ENCODE measurements at regions of chr2 and their contacts with region 1.

Region 1: GRCh38 chr2:65320042-65320725 is 92.6 kb downstream of the ACTR2 start:
- DNase-seq: peak; percentile 56
- H3K4me3 Mint-ChIP-seq: no peak overlapping the region
- H3K27ac Mint-ChIP-seq: peak overlapping the region; percentile 89
- H3K4me1 Mint-ChIP-seq: peaks cover 24% of the 10 kb centered on the region
- H3K27me3 Mint-ChIP-seq: no peaks in the 10 kb centered on the region

Region 2: DNA sequence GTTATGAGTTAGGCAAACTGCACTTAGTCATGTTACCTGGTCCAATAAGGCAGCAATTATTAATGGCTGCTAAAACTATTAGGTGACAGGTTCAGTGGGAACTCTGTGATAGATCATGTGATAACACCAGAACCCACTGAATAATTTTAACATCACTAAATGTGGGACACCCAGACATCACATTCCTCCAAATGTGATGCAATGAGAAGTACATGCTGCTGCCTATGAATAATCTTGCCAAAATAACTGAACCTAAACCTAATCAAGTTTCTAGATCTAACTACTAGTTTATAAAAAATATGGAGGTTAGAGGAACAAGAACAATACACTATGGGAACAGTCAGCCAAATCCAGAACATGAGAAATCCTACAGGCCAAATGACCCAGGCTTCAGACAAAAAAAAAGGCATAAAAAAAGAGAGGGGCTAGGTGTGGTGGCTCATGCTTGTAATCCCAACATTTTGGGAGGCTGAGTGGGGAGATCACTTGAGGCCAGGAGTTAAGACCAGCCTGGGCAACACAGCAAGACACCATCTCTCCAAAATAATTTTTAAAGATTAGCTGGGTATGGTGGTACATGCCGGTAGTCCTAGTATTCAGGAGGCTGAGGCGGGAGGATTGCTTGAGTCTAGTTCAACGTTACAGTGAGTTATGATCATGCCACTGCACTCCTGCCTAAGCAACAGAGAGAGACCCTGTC is 99.6 kb before region 1 on chr2:
- CTCF ChIA-PET with region 1: no interaction called
- POLR2A ChIA-PET with region 1: no interaction called
- intact Hi-C with region 1: no loop called
- DNase-seq: no peak
- H3K4me3 Mint-ChIP-seq: no peak overlapping the region
- H3K27ac Mint-ChIP-seq: no peak overlapping the region
- H3K4me1 Mint-ChIP-seq: no peaks in the 10 kb centered on the region
- H3K27me3 Mint-ChIP-seq: no peaks in the 10 kb centered on the region

Region 3: GRCh38 chr2:65264821-65265670 is 55.1 kb before region 1 on chr2:
- CTCF ChIA-PET with region 1: interaction called, 11 read pairs
- POLR2A ChIA-PET with region 1: no interaction called
- intact Hi-C with region 1: no loop called
- DNase-seq: no peak
- H3K4me3 Mint-ChIP-seq: no peak overlapping the region
- H3K27ac Mint-ChIP-seq: no peak overlapping the region
- H3K4me1 Mint-ChIP-seq: peaks cover 12% of the 10 kb centered on the region
- H3K27me3 Mint-ChIP-seq: no peaks in the 10 kb centered on the region

Region 4: GRCh38 chr2:65300761-65301711 is 19.1 kb before region 1 on chr2:
- CTCF ChIA-PET with region 1: interaction called, 28 read pairs
- POLR2A ChIA-PET with region 1: interaction called, 28 read pairs
- intact Hi-C with region 1: loop called (anchors 1 kb)
- DNase-seq: peak; percentile 87
- H3K4me3 Mint-ChIP-seq: peak overlapping the region; percentile 50
- H3K27ac Mint-ChIP-seq: peak overlapping the region; percentile 77
- H3K4me1 Mint-ChIP-seq: peaks cover 45% of the 10 kb centered on the region
- H3K27me3 Mint-ChIP-seq: peaks cover 15% of the 10 kb centered on the region

Region 5: GRCh38 chr2:65344689-65345088 is 24.5 kb after region 1 on chr2:
- CTCF ChIA-PET with region 1: no interaction called
- POLR2A ChIA-PET with region 1: no interaction called
- intact Hi-C with region 1: no loop called
- DNase-seq: no peak
- H3K4me3 Mint-ChIP-seq: no peak overlapping the region
- H3K27ac Mint-ChIP-seq: no peak overlapping the region
- H3K4me1 Mint-ChIP-seq: no peaks in the 10 kb centered on the region
- H3K27me3 Mint-ChIP-seq: no peaks in the 10 kb centered on the region

Region 6: GRCh38 chr2:65366595-65367125 is 46.5 kb after region 1 on chr2:
- CTCF ChIA-PET with region 1: interaction called, 3 read pairs
- POLR2A ChIA-PET with region 1: interaction called, 5 read pairs
- intact Hi-C with region 1: loop called (anchors 1 kb)
- DNase-seq: peak; percentile 56
- H3K4me3 Mint-ChIP-seq: no peak overlapping the region
- H3K27ac Mint-ChIP-seq: no peak overlapping the region
- H3K4me1 Mint-ChIP-seq: peaks cover 19% of the 10 kb centered on the region
- H3K27me3 Mint-ChIP-seq: no peaks in the 10 kb centered on the region

Region 7: GRCh38 chr2:65548576-65549256 is 228.5 kb after region 1 on chr2:
- CTCF ChIA-PET with region 1: no interaction called
- POLR2A ChIA-PET with region 1: no interaction called
- intact Hi-C with region 1: loop called (anchors 1 kb)
- DNase-seq: no peak
- H3K4me3 Mint-ChIP-seq: no peak overlapping the region
- H3K27ac Mint-ChIP-seq: no peak overlapping the region
- H3K4me1 Mint-ChIP-seq: peaks cover 9% of the 10 kb centered on the region
- H3K27me3 Mint-ChIP-seq: no peaks in the 10 kb centered on the region